Panc1 (cell line): ENCODE measurements at regions of chr2 and their contacts with region 1.

Region 1: DNA sequence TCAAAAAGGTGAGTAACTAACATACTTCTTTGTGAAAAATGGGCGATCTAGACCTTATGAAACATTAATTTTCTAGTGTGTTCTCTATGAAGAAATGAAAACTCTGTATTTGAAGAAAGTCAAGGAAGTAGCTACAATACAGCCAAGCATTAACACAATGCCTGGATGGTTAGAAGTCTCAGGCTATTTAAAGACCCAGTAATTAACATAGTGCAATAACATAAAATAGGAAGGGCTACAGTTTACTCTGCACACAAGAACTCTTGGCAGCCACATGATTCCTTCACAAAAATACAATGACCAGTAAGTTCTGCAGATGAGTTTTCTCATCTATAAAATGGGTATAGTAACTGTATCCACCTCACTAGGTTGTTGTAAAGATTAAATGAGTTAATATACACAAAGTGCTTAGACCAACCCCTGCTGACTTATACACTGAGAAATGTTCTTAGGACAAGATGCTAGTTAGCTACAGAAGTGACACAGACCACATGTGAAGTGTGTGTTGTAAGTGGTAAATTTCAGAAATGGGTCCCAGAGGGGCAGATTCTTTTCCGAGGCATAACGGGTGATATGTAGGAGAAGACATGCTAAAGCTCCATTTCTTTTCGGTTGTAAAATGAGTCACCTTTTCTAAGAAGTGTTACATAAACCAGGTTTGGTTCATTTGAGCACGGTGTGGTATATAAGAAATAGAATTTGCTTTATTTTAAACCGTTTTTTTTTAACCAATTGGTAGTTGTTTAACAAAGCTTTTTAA is 61.8 kb downstream of the CXCR4 start:
- DNase-seq: no peak
- ATAC-seq: no peak
- H3K4me3 ChIP-seq: no peak overlapping the region
- H3K27ac ChIP-seq: no peak overlapping the region
- H3K4me1 ChIP-seq: no peaks in the 10 kb centered on the region
- H3K27me3 ChIP-seq: peaks cover 6% of the 10 kb centered on the region; the same call in 1 of the 2 replicates
- CTCF ChIP-seq: no peak

Region 2: GRCh38 chr2:136468799-136469369 is 412.8 kb after region 1 on chr2:
- CTCF ChIA-PET with region 1: no interaction called
- POLR2A ChIA-PET with region 1: interaction called, 14 read pairs
- in situ Hi-C with region 1: no loop called
- intact Hi-C with region 1: no loop called
- DNase-seq: no peak
- ATAC-seq: no peak
- H3K4me3 ChIP-seq: no peak overlapping the region
- H3K27ac ChIP-seq: no peak overlapping the region
- H3K4me1 ChIP-seq: no peaks in the 10 kb centered on the region
- H3K27me3 ChIP-seq: no peaks in the 10 kb centered on the region
- CTCF ChIP-seq: no peak

Region 3: GRCh38 chr2:136572335-136572734 is 516.2 kb after region 1 on chr2:
- CTCF ChIA-PET with region 1: no interaction called
- POLR2A ChIA-PET with region 1: no interaction called
- in situ Hi-C with region 1: no loop called
- intact Hi-C with region 1: no loop called
- DNase-seq: no peak
- ATAC-seq: no peak
- H3K4me3 ChIP-seq: no peak overlapping the region
- H3K27ac ChIP-seq: no peak overlapping the region
- H3K4me1 ChIP-seq: no peaks in the 10 kb centered on the region
- H3K27me3 ChIP-seq: no peaks in the 10 kb centered on the region
- CTCF ChIP-seq: no peak